Thyroid gland (tissue), 4 donors: ENCODE measurements at regions of chr14 and their contacts with region 1.

Region 1: GRCh38 chr14:77151918-77152588 is 10.5 kb upstream of the ZDHHC22 start:
- DNase-seq: no peak
- H3K4me3 ChIP-seq: no peak overlapping the region
- H3K27ac ChIP-seq: no peak overlapping the region
- H3K4me1 ChIP-seq: no peaks in the 10 kb centered on the region
- H3K27me3 ChIP-seq: no peaks in the 10 kb centered on the region
- CTCF ChIP-seq: peak in 1 of 6 experiments; percentile 3
- POLR2A ChIP-seq: no peak

Region 2: DNA sequence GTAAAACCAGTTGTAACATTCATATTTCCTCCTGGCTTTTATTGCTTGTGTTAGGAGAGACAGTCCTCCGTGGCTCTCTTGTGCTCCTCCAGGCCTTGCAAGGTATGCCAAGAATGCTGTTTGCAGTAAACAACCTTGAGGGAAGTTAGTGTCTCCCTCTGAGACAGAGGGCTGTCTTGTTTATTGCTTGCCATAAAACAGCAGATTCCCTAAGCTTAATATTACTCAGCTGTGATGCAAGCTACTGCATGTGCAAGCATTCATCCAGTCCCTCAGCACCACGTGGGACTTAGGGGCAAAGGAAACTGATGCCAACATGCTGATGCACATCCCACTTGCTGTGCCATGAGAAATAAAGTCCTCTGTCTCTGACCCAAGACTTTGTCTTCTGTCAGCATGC is 162.0 kb after region 1 on chr14:
- intact Hi-C with region 1: loop called (anchors 10 kb)
- DNase-seq: peak in 1 of 2 donors; percentile 24
- H3K4me3 ChIP-seq: no peak overlapping the region
- H3K27ac ChIP-seq: peak overlapping the region in 2 of 3 donors; percentile 52 to 60
- H3K4me1 ChIP-seq: peaks cover 19 to 54% of the 10 kb centered on the region in 2 donors
- H3K27me3 ChIP-seq: no peaks in the 10 kb centered on the region
- CTCF ChIP-seq: no peak
- POLR2A ChIP-seq: no peak